ENCODE measurements at regions of chr12 and their contacts with region 1.

Region 1: GRCh38 chr12:109863847-109864712 is 16.3 kb downstream of the GLTP start:
- DNase-seq: peak; percentile 75
- H3K4me3 ChIP-seq: no peak overlapping the region
- H3K27ac ChIP-seq: peak overlapping the region; percentile 87 to 89 (median 88)
- H3K4me1 ChIP-seq: peaks cover 13 to 66% (median 38%) of the 10 kb centered on the region in 4 donors
- H3K27me3 ChIP-seq: no peaks in the 10 kb centered on the region
- CTCF ChIP-seq: no peak
- EP300 ChIP-seq: no peak
- POLR2A ChIP-seq: peak; percentile 36

Region 2: DNA sequence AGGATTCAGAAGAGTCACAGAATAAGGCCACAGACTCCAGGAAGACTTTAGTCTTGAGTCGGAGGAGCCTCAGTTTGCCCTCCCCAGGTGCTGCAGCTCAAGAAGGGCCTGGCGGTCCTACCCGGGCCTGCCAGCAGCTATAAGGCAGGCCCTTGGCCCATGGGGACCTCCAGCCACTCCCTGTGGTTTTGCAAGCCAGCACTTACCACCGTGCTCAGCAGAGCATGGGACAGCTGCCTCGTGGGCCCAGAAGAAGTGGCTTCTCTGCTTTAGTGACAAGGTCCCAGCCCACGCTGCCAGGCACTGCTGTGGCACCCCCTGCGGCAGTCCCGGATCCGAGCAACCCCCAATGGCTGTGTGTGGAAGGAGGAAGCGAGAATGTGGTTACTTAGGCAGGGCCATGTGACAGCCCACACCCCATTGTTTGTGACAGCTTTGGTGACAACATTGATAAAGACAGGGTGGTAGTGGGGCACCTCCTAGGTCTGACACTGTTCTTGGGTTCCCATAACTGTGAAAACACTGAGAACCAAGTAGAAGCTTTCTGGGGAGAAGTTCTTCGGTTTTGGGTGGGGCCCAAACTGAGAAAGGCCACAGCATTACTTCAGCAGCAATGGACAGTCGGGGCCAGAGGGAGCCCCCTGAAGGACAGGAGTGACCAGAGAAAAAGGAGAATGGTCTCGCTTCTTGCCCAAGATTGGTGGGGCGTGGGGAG is 1230.4 kb before region 1 on chr12 and contains the start of gene SELPLG:
- in situ Hi-C with region 1: no loop called
- intact Hi-C with region 1: loop called (anchors 5 kb)
- DNase-seq: peak; percentile 84
- H3K4me3 ChIP-seq: peak within 1 kb of the TSS in 3 of 4 donors; percentile 16 to 41 (median 17)
- H3K27ac ChIP-seq: peak within 1 kb of the TSS; percentile 69 to 77 (median 76)
- H3K4me1 ChIP-seq: peaks cover 9 to 52% (median 28%) of the 10 kb centered on the region in 4 donors
- H3K27me3 ChIP-seq: no peaks in the 10 kb centered on the region
- CTCF ChIP-seq: peak in 1 of 5 experiments; percentile 9
- EP300 ChIP-seq: no peak
- POLR2A ChIP-seq: peak; percentile 51
- total RNA-seq, gene SELPLG: 1.6 to 9.4 (median 3.6) TPM

Region 3: DNA sequence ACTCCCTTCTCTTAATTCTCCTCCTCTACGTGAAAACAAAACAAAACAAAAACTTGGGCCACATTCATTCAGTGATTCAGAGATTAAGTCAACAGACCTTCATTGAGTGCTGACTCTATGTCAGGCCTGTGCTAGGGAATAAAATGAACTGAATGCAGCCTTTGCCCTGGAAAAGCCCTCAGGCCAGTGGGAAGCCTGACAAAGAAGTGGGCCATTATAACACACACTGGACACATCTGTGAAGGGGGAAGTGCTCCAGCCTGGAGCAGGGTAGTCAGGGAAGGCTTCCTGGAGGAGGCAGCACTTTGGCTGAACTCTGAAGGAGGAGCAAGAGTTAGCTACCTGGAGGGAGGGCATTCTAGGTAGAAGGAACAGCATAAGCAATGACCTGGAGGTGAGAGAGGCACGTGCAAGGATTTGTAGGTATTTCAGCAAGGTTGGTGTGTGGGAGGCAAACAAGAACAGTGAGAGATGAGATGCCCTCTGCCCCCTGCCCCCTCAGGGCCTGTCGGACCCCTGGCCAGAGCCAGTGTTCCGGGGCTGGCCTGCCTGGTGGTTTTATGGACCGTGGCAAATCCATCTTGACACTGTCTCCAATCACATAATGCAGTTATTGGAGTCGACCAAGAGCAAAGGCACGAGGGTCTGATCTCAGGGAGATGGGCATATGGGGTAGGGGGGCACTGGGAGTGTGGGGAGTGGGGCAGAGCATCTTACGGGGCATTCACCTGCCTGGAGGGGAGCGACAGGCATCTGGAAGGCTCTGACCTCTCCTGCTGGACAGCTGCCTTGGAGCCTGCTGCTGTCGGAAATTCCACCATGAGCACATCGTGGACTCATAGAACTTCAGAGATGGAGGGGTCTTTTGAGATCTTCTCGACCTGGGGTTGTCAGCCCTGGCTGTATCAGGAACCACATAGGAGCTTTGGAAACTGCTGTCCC is 153.2 kb before region 1 on chr12:
- in situ Hi-C with region 1: no loop called
- intact Hi-C with region 1: no loop called
- DNase-seq: no peak
- H3K4me3 ChIP-seq: no peak overlapping the region
- H3K27ac ChIP-seq: no peak overlapping the region
- H3K4me1 ChIP-seq: peaks cover 6 to 21% (median 17%) of the 10 kb centered on the region in 4 donors
- H3K27me3 ChIP-seq: no peaks in the 10 kb centered on the region
- CTCF ChIP-seq: no peak
- EP300 ChIP-seq: no peak
- POLR2A ChIP-seq: no peak

Region 4: GRCh38 chr12:109775172-109775881 is 88.8 kb before region 1 on chr12:
- in situ Hi-C with region 1: no loop called
- intact Hi-C with region 1: no loop called
- DNase-seq: peak; percentile 82
- H3K4me3 ChIP-seq: no peak overlapping the region
- H3K27ac ChIP-seq: no peak overlapping the region
- H3K4me1 ChIP-seq: peaks cover 0 to 9% (median 3%) of the 10 kb centered on the region in 4 donors
- H3K27me3 ChIP-seq: no peaks in the 10 kb centered on the region
- CTCF ChIP-seq: peak; percentile 84 to 90 (median 86)
- EP300 ChIP-seq: no peak
- POLR2A ChIP-seq: no peak

Measured in transverse colon (tissue), 4 donors.